Activated naive CD4-positive, alpha-beta T cell treated with anti-CD3 and anti-CD28 coated beads for 36 hours (primary cell): ENCODE measurements at regions of chr7 and their contacts with region 1.

Region 1: DNA sequence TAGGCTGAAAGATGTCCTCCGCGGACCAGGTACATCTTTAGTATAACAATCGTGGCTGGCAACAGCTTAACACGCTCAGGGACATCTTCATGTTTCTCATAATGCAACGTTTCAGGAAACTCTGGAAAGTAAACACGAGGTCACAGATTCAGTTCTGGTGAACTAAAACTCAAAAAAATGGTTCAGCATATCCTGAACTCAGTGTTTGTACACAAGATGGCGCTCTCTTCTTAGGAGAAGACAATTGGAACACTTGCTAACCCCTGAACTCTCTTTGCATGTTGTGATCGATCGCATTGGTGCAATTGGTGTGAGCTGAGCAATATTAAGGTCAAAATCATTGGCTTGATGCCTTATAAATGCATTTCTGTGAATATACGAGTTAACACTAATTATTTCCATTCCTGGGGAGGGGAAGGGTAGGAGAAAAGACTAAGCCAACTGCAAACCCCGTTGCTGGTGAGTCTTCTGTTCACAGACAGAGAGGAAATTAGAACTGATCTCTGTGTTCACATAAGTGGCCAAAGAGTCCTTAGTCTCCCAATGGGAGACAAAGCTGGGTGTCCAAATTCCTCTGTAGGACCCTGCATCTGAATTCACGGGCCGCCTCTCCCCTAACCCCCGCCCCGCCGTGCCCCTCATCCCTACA is 52.6 kb upstream of the FAM180A start:
- DNase-seq: peak; percentile 37
- H3K4me3 Mint-ChIP-seq: no peak overlapping the region
- H3K27ac Mint-ChIP-seq: no peak overlapping the region
- H3K4me1 Mint-ChIP-seq: peaks cover 2% of the 10 kb centered on the region
- H3K27me3 Mint-ChIP-seq: peaks cover 10% of the 10 kb centered on the region

Region 2: GRCh38 chr7:136009488-136010079 is 208.4 kb after region 1 on chr7:
- CTCF ChIA-PET with region 1: interaction called, 40 read pairs
- intact Hi-C with region 1: loop called (anchors 1 kb)
- DNase-seq: no peak
- H3K4me3 Mint-ChIP-seq: no peak overlapping the region
- H3K27ac Mint-ChIP-seq: no peak overlapping the region
- H3K4me1 Mint-ChIP-seq: peaks cover 4% of the 10 kb centered on the region
- H3K27me3 Mint-ChIP-seq: peaks cover 10% of the 10 kb centered on the region

Region 3: DNA sequence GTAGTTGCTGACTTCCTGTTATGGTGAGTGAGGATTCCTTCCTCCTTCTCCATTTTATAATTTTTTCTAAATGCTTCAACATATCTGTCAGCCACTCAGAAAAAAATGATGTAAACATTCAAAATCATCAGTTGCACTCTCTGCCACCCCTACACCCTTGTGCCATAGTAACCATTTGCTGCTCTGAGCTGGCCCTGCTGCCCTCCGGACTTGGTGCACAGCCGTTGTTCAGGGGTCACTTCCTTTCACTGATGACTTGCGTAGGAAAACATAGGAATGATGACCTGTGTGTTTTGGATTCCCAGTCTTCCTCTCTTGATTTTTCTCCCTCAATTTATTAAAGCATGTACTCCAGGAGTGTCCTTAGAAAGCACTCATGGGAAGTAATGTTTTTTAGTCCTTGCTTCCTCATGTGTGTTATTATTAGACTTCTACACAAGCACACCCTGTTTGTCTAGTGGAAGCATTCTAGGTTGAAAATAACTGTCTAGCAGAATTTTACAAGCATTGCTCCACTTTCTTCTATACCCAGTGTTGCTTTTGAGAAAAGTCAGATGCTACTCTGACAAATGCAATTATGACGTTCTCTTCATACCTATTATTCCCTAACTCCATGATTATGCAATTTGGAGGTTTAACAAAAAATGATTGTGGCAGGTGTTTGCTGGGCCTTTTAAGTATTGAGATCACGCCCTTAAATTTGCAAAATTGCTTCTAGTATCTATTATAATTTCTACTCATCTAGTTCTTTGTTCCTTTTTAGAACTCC is 238.6 kb after region 1 on chr7:
- CTCF ChIA-PET with region 1: no interaction called
- intact Hi-C with region 1: no loop called
- DNase-seq: no peak
- H3K4me3 Mint-ChIP-seq: no peak overlapping the region
- H3K27ac Mint-ChIP-seq: no peak overlapping the region
- H3K4me1 Mint-ChIP-seq: peaks cover 4% of the 10 kb centered on the region
- H3K27me3 Mint-ChIP-seq: peaks cover 11% of the 10 kb centered on the region

Region 4: DNA sequence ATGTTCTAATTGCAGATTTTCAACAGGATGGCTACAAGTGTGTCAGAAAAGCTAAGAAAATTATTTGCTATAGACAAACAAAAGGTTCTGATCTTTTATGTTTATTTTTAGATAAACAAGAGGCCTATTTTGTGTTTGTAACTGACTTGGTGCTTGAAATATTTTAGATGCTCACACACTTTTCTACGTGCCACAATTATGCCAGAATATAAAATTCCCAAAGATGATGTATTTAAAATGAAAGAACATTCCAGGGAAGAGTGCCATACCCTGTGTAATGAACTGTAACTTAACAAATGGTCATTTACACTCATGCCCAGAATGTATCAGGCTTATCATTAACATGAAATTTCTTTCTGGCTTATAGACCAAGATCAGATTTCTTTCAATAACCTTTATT is 320.8 kb after region 1 on chr7:
- CTCF ChIA-PET with region 1: no interaction called
- intact Hi-C with region 1: loop called (anchors 10 kb)
- DNase-seq: no peak
- H3K4me3 Mint-ChIP-seq: no peak overlapping the region
- H3K27ac Mint-ChIP-seq: no peak overlapping the region
- H3K4me1 Mint-ChIP-seq: no peaks in the 10 kb centered on the region
- H3K27me3 Mint-ChIP-seq: peaks cover 6% of the 10 kb centered on the region

Region 5: DNA sequence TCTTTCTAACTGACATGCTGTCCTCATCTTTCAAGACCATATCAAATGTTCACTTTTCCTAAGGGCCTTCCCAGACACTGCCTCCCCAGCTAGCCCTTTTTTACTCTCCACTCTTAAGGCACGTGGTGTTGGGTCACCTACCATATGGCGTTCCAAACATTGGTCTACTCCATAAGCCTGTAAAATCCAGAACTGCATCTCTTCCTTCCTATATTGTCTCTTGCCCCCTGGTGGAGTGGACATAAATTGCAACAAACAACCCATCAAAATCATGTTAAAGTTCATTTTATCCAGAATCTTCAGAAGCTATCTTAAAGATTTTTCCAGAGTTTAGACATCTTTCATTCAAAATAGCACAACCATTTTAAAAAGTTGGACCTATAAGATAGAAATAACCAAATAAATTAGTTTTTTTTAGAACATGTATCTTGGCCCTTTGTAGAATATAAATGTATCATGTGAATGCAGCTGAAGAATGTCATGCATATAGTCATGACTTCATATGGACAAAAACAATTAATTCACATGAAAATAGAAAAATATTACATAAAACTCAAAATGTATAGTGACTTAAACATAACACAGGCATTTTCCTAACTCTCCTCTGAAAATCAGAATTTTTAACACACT is 886.6 kb after region 1 on chr7:
- CTCF ChIA-PET with region 1: no interaction called
- intact Hi-C with region 1: loop called (anchors 5 kb)
- DNase-seq: no peak
- H3K4me3 Mint-ChIP-seq: no peak overlapping the region
- H3K27ac Mint-ChIP-seq: no peak overlapping the region
- H3K4me1 Mint-ChIP-seq: no peaks in the 10 kb centered on the region
- H3K27me3 Mint-ChIP-seq: no peaks in the 10 kb centered on the region

Region 6: GRCh38 chr7:136874238-136875032 is 1073.3 kb after region 1 on chr7:
- CTCF ChIA-PET with region 1: no interaction called
- intact Hi-C with region 1: loop called (anchors 1 kb)
- DNase-seq: no peak
- H3K4me3 Mint-ChIP-seq: no peak overlapping the region
- H3K27ac Mint-ChIP-seq: no peak overlapping the region
- H3K4me1 Mint-ChIP-seq: no peaks in the 10 kb centered on the region
- H3K27me3 Mint-ChIP-seq: peaks cover 33% of the 10 kb centered on the region

Region 7: GRCh38 chr7:137454246-137454724 is 1653.1 kb after region 1 on chr7:
- CTCF ChIA-PET with region 1: no interaction called
- intact Hi-C with region 1: loop called (anchors 1 kb)
- DNase-seq: no peak
- H3K4me3 Mint-ChIP-seq: no peak overlapping the region
- H3K27ac Mint-ChIP-seq: no peak overlapping the region
- H3K4me1 Mint-ChIP-seq: no peaks in the 10 kb centered on the region
- H3K27me3 Mint-ChIP-seq: peaks cover 7% of the 10 kb centered on the region